ENCODE measurements at regions of chr12 and their contacts with region 1.

Region 1: GRCh38 chr12:9925708-9926393 is 6.3 kb downstream of the CLEC2A start:
- DNase-seq: peak in 2 of 4 donors; percentile 41 to 43
- ATAC-seq: peak; percentile 80
- H3K4me3 ChIP-seq: no peak overlapping the region
- H3K27ac ChIP-seq: no peak overlapping the region
- H3K4me1 ChIP-seq: no peaks in the 10 kb centered on the region
- H3K27me3 ChIP-seq: no peaks in the 10 kb centered on the region
- CTCF ChIP-seq: peak in 1 of 2 donors; percentile 46

Region 2: DNA sequence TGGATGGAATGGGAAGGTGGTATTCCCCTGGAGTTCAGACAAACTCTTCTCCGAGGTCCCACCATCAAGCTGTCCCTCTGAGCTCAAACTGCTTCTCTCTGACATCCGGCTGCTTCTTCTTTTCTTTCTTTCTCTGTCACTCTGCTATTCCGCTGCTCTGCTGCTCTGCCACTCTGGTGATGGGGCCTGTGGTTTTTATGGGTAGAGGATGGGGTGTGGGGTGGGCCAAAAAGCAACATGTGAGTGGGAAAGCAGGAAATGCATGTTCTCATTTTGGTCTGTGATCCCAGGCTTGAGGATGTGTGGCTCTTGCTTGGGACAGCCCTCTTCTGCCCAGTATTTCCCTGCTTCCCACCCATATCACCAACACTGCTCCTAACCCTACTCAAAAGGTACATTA is 223.6 kb before region 1 on chr12:
- intact Hi-C with region 1: no loop called
- DNase-seq: no peak
- ATAC-seq: no peak
- H3K4me3 ChIP-seq: no peak overlapping the region
- H3K27ac ChIP-seq: no peak overlapping the region
- H3K4me1 ChIP-seq: peaks cover 0 to 30% of the 10 kb centered on the region in 2 donors
- H3K27me3 ChIP-seq: no peaks in the 10 kb centered on the region
- CTCF ChIP-seq: no peak

Region 3: GRCh38 chr12:9745199-9745598 is 180.7 kb before region 1 on chr12:
- intact Hi-C with region 1: loop called in 1 of 2 experiments (anchors 5 kb)
- DNase-seq: no peak
- ATAC-seq: no peak
- H3K4me3 ChIP-seq: no peak overlapping the region
- H3K27ac ChIP-seq: no peak overlapping the region
- H3K4me1 ChIP-seq: peaks cover 0 to 20% of the 10 kb centered on the region in 2 donors
- H3K27me3 ChIP-seq: no peaks in the 10 kb centered on the region
- CTCF ChIP-seq: no peak

Region 4: GRCh38 chr12:9992296-9992695 is 66.4 kb after region 1 on chr12:
- intact Hi-C with region 1: no loop called
- DNase-seq: no peak
- ATAC-seq: no peak
- H3K4me3 ChIP-seq: no peak overlapping the region
- H3K27ac ChIP-seq: no peak overlapping the region
- H3K4me1 ChIP-seq: no peaks in the 10 kb centered on the region
- H3K27me3 ChIP-seq: no peaks in the 10 kb centered on the region
- CTCF ChIP-seq: no peak